ENCODE measurements at regions of chr2 and their contacts with region 1.

Region 1: DNA sequence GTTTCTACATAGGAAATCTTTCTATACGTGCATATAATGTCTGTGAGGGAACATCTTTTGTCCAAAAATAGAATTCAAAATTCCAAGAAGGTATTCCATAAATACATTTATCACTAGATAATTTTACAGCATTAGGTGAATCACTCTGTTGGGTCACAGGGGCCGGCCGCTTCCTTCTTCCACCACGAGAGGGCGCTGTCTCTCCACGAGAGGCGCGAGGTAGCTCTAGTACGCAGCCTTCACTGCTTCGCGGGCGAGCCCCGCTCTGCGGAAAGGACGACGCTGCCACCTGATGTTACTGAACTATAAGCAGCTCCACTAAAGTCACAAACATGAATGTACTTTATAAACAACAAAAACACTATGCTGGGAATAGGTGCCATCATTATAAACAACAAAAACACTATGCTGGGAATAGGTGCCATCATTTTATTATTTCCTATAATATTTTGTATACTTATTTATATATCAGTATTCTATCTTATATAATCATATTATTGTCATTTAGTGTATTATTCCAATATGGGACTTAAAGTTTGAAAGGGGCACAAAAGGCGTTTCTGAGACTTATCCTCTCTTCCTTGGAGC is 69.4 kb upstream of the REV1 start:
- DNase-seq: peak; percentile 65 to 91 (median 81)
- ATAC-seq: peak; percentile 95
- H3K4me3 ChIP-seq: no peak overlapping the region
- H3K4me3 Mint-ChIP-seq: no peak overlapping the region
- H3K27ac ChIP-seq: no peak overlapping the region
- H3K27ac Mint-ChIP-seq: no peak overlapping the region
- H3K4me1 ChIP-seq: no peaks in the 10 kb centered on the region
- H3K4me1 Mint-ChIP-seq: peaks cover 2% of the 10 kb centered on the region
- H3K27me3 ChIP-seq: no peaks in the 10 kb centered on the region
- H3K27me3 Mint-ChIP-seq: no peaks in the 10 kb centered on the region
- CTCF ChIP-seq: peak; percentile 98

Region 2: DNA sequence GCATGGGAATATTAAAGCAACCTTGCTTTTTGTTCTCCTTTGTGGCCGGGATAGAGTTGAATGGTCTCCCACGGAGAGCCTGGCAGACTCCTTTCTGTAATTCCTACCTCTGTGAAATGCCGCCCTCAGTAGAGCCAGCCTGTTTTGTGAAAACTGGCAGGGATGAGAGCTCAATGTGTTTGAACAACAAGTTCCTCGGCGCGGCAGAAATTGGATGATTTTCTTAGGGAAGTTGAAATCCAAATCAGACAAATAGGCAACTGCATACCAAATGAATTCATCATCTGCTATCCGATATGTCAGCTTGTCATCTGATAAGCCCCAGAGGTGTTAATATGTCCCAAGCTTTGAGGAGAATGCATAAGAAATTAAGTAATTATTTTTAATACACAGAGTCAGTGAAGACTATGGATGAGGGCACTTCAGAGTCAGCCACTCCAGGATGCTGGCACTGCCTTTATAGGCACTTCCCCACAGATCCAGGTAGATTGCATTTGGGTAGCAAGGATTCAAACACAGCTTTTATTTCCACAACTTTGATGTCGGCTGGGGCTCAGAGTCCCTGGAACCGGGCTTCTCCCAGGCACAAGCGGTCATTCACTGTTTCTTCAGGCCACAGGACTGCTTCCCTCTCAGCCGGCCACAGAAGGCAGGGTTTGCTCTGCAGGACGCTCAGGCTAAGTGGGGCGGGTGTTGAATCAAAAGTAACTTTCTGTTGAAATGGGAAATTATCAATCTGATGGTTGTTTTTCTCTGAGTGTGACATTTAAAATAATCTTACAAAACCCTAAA is 13.4 kb after region 1 on chr2:
- CTCF ChIA-PET with region 1: interaction called, 10 read pairs
- POLR2A ChIA-PET with region 1: no interaction called
- intact Hi-C with region 1: no loop called
- DNase-seq: no peak
- ATAC-seq: no peak
- H3K4me3 ChIP-seq: no peak overlapping the region
- H3K4me3 Mint-ChIP-seq: no peak overlapping the region
- H3K27ac ChIP-seq: no peak overlapping the region
- H3K27ac Mint-ChIP-seq: no peak overlapping the region
- H3K4me1 ChIP-seq: no peaks in the 10 kb centered on the region
- H3K4me1 Mint-ChIP-seq: no peaks in the 10 kb centered on the region
- H3K27me3 ChIP-seq: no peaks in the 10 kb centered on the region
- H3K27me3 Mint-ChIP-seq: no peaks in the 10 kb centered on the region
- CTCF ChIP-seq: no peak

Region 3: GRCh38 chr2:100242891-100243619 is 683.9 kb after region 1 on chr2:
- CTCF ChIA-PET with region 1: interaction called, 8 read pairs
- POLR2A ChIA-PET with region 1: no interaction called
- intact Hi-C with region 1: loop called in 1 of 2 experiments (anchors 1 kb)
- DNase-seq: peak in 7 of 9 experiments; percentile 6 to 59 (median 41)
- ATAC-seq: no peak
- H3K4me3 ChIP-seq: no peak overlapping the region
- H3K4me3 Mint-ChIP-seq: no peak overlapping the region
- H3K27ac ChIP-seq: no peak overlapping the region
- H3K27ac Mint-ChIP-seq: no peak overlapping the region
- H3K4me1 ChIP-seq: no peaks in the 10 kb centered on the region
- H3K4me1 Mint-ChIP-seq: peaks cover 2% of the 10 kb centered on the region
- H3K27me3 ChIP-seq: no peaks in the 10 kb centered on the region
- H3K27me3 Mint-ChIP-seq: peaks cover 7% of the 10 kb centered on the region
- CTCF ChIP-seq: peak; percentile 50

Region 4: DNA sequence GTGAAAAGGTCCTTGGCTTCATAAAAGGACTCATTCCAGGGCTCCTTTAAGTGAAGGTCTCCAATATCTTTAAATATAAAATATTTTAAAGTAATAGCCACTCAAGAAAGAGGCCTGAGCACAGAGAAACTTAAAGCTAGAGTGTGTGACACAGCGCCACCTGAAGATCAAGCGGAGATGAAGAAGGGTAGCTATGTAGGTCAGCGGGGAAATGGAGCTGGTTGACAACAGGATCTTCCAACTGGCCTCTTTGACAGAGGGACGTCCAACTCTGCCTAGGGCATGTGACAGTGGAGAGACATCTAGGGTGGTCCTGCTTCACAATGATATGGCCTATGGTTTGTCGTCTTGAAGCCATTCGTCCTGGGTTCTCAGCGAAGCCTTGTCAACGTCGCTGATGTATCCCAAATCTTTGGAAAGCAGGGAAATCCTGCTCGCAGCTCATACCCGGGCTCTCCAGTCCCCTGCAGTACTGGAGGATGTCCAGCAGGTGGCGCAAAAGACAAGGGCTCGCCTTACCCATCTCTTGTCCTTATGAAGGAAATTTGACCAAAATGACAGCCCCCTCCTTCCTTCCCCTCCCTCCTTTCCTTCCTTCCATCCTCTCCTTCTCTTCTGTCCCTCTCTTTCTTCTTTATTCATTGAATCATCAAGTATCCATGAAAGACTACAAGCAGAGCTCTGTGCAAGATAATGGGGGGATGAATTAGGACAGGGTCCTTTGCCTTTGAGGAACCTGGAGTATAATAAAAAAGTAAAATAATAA is 703.6 kb after region 1 on chr2:
- CTCF ChIA-PET with region 1: interaction called, 8 read pairs
- POLR2A ChIA-PET with region 1: no interaction called
- intact Hi-C with region 1: loop called (anchors 5 kb)
- DNase-seq: peak; percentile 16 to 73 (median 54)
- ATAC-seq: peak; percentile 70
- H3K4me3 ChIP-seq: no peak overlapping the region
- H3K4me3 Mint-ChIP-seq: no peak overlapping the region
- H3K27ac ChIP-seq: no peak overlapping the region
- H3K27ac Mint-ChIP-seq: no peak overlapping the region
- H3K4me1 ChIP-seq: no peaks in the 10 kb centered on the region
- H3K4me1 Mint-ChIP-seq: peaks cover 2% of the 10 kb centered on the region
- H3K27me3 ChIP-seq: no peaks in the 10 kb centered on the region
- H3K27me3 Mint-ChIP-seq: no peaks in the 10 kb centered on the region
- CTCF ChIP-seq: peak; percentile 91

Region 5: GRCh38 chr2:100381240-100381639 is 822.1 kb after region 1 on chr2:
- CTCF ChIA-PET with region 1: interaction called, 11 read pairs
- POLR2A ChIA-PET with region 1: no interaction called
- intact Hi-C with region 1: loop called (anchors 1 to 2 kb)
- DNase-seq: peak; percentile 18 to 78 (median 68)
- ATAC-seq: peak; percentile 31
- H3K4me3 ChIP-seq: no peak overlapping the region
- H3K4me3 Mint-ChIP-seq: no peak overlapping the region
- H3K27ac ChIP-seq: no peak overlapping the region
- H3K27ac Mint-ChIP-seq: no peak overlapping the region
- H3K4me1 ChIP-seq: no peaks in the 10 kb centered on the region
- H3K4me1 Mint-ChIP-seq: no peaks in the 10 kb centered on the region
- H3K27me3 ChIP-seq: no peaks in the 10 kb centered on the region
- H3K27me3 Mint-ChIP-seq: peaks cover 4% of the 10 kb centered on the region
- CTCF ChIP-seq: peak; percentile 81